Activated naive CD4-positive, alpha-beta T cell treated with anti-CD3 and anti-CD28 coated beads for 36 hours (primary cell): ENCODE measurements at regions of chr11 and their contacts with region 1.

Region 1: GRCh38 chr11:7696424-7696823 is 9.9 kb downstream of the OVCH2 start:
- DNase-seq: no peak
- H3K4me3 Mint-ChIP-seq: no peak overlapping the region
- H3K27ac Mint-ChIP-seq: no peak overlapping the region
- H3K4me1 Mint-ChIP-seq: peaks cover 7% of the 10 kb centered on the region
- H3K27me3 Mint-ChIP-seq: peaks cover 23% of the 10 kb centered on the region

Region 2: GRCh38 chr11:7353100-7353499 is 343.3 kb before region 1 on chr11:
- CTCF ChIA-PET with region 1: interaction called, 4 read pairs
- intact Hi-C with region 1: loop called (anchors 1 kb)
- DNase-seq: peak; percentile 42
- H3K4me3 Mint-ChIP-seq: no peak overlapping the region
- H3K27ac Mint-ChIP-seq: no peak overlapping the region
- H3K4me1 Mint-ChIP-seq: no peaks in the 10 kb centered on the region
- H3K27me3 Mint-ChIP-seq: peaks cover 11% of the 10 kb centered on the region